GM12878 (cell line): ENCODE measurements at regions of chr5 and their contacts with region 1.

Region 1: DNA sequence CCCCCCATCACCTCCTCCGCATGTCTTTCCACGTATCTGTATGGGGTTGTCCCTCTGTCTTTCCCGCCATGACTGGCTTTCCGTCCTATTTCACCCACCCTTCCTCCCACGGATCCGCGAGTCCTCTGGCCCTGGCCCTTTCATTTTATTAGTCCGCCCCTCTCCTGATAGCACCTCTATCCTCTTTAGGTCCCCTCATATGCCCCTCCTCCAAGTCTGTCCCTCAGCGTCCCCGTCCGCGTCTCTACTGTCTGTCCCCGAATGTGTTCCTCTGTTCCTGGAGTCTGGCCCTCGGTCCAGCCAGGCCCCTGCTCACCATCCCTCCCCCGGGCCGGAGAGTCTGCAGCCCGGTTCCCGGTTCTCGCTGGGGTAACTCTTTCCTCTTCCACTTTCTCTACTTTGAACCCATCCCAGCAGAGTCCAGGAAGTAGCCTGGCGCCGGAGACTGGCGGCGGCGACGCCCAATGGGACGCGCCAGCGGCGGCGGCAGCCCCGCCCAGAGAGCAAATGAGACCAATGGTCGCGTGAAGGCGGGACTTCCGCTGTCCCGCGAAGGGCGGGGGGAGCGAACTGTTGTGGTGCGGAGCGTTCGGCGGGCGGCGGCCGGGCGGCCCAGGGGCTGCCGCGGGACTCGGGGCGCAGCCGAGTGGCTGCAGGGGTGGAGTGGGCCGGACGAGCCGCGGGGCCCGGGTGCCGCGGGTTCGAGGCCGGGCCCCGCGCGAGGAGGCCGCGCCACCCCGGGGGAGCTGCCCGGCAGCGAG is at the start of gene SAP30L:
- DNase-seq: peak; percentile 81
- ATAC-seq: peak; percentile 91
- H3K4me3 ChIP-seq: peak within 1 kb of the TSS; percentile 87
- H3K27ac ChIP-seq: peak within 1 kb of the TSS; percentile 84
- H3K4me1 ChIP-seq: peaks cover 5% of the 10 kb centered on the region
- H3K27me3 ChIP-seq: no peaks in the 10 kb centered on the region
- CTCF ChIP-seq: no peak
- EP300 ChIP-seq: no peak
- POLR2A ChIP-seq: peak; percentile 85
- RAD21 ChIP-seq: no peak
- polyA plus RNA-seq, gene SAP30L: 2.4 to 15.4 TPM

Region 2: GRCh38 chr5:154421868-154422267 is 23.7 kb before region 1 on chr5:
- CTCF ChIA-PET with region 1: interaction called, 27 read pairs
- POLR2A ChIA-PET with region 1: no interaction called
- RAD21 ChIA-PET with region 1: interaction called, 8 read pairs
- SMC1A ChIA-PET with region 1: interaction called, 6 read pairs
- in situ Hi-C with region 1: no loop called
- intact Hi-C with region 1: no loop called
- DNase-seq: no peak
- ATAC-seq: peak; percentile 86
- H3K4me3 ChIP-seq: no peak overlapping the region
- H3K27ac ChIP-seq: no peak overlapping the region
- H3K4me1 ChIP-seq: peaks cover 2% of the 10 kb centered on the region; the same call in 1 of the 2 replicates
- H3K27me3 ChIP-seq: no peaks in the 10 kb centered on the region
- CTCF ChIP-seq: peak; percentile 53 to 64 (median 56)
- EP300 ChIP-seq: no peak
- POLR2A ChIP-seq: no peak
- RAD21 ChIP-seq: peak; percentile 56

Region 3: DNA sequence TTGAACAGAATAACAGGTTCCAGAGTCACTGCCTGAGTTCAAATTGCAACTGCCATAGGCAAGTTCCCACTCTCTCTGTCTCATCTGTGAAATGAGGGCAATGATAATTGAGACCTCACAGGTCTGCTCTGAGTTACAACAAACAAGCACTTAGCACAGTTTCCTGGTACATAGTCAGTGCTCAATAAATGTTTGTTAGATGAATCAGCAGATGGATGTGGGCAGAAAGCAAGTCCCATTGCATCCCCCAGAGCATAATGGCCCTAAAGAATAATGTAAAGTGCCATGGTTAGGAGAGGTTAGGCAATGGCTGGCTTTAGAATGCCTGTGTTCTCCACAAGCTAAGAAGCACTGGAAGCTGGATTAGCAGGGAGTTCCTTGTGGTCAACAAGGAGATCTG is 173.1 kb after region 1 on chr5:
- CTCF ChIA-PET with region 1: no interaction called
- POLR2A ChIA-PET with region 1: no interaction called
- RAD21 ChIA-PET with region 1: no interaction called
- SMC1A ChIA-PET with region 1: no interaction called
- in situ Hi-C with region 1: no loop called
- intact Hi-C with region 1: no loop called
- DNase-seq: no peak
- ATAC-seq: no peak
- H3K4me3 ChIP-seq: no peak overlapping the region
- H3K27ac ChIP-seq: no peak overlapping the region
- H3K4me1 ChIP-seq: no peaks in the 10 kb centered on the region
- H3K27me3 ChIP-seq: no peaks in the 10 kb centered on the region; a peak in 1 of 4 replicates
- CTCF ChIP-seq: no peak
- EP300 ChIP-seq: no peak
- POLR2A ChIP-seq: no peak
- RAD21 ChIP-seq: no peak

Region 4: GRCh38 chr5:154857530-154858296 is 412.1 kb after region 1 on chr5:
- CTCF ChIA-PET with region 1: no interaction called
- POLR2A ChIA-PET with region 1: no interaction called
- RAD21 ChIA-PET with region 1: interaction called, 3 read pairs
- SMC1A ChIA-PET with region 1: no interaction called
- in situ Hi-C with region 1: no loop called
- intact Hi-C with region 1: loop called (anchors 5 kb)
- DNase-seq: peak; percentile 62
- ATAC-seq: peak; percentile 78
- H3K4me3 ChIP-seq: peak overlapping the region; percentile 80
- H3K27ac ChIP-seq: peak overlapping the region; percentile 91
- H3K4me1 ChIP-seq: peaks cover 11% of the 10 kb centered on the region
- H3K27me3 ChIP-seq: no peaks in the 10 kb centered on the region
- CTCF ChIP-seq: 0 out of 6 replicates have a peak, but pooled peaks of 1 of the 3 experiments have one; percentile 5
- EP300 ChIP-seq: peak in 1 of 2 experiments; percentile 8; a peak in 1 of 4 replicates
- POLR2A ChIP-seq: peak; percentile 67; the same call in 1 of the 2 replicates
- RAD21 ChIP-seq: no peak

Region 5: GRCh38 chr5:154937718-154938466 is 492.3 kb after region 1 on chr5 and contains the start of gene GEMIN5:
- CTCF ChIA-PET with region 1: no interaction called
- POLR2A ChIA-PET with region 1: no interaction called
- RAD21 ChIA-PET with region 1: no interaction called
- SMC1A ChIA-PET with region 1: no interaction called
- in situ Hi-C with region 1: no loop called
- intact Hi-C with region 1: loop called (anchors 10 kb)
- DNase-seq: peak; percentile 54
- ATAC-seq: peak; percentile 92
- H3K4me3 ChIP-seq: peak within 1 kb of the TSS; percentile 87
- H3K27ac ChIP-seq: peak within 1 kb of the TSS; percentile 64
- H3K4me1 ChIP-seq: peaks cover 6% of the 10 kb centered on the region
- H3K27me3 ChIP-seq: no peaks in the 10 kb centered on the region
- CTCF ChIP-seq: no peak
- EP300 ChIP-seq: 0 out of 4 replicates have a peak, but pooled peaks of 1 of the 2 experiments have one; percentile 24
- POLR2A ChIP-seq: peak; percentile 88
- RAD21 ChIP-seq: no peak
- polyA plus RNA-seq, gene GEMIN5: 6.3 to 6.8 TPM